Activated T-helper 1 cell treated with anti-CD3 and anti-CD28 coated beads, Interleukin-12 subunit alpha, Interleukin-12 subunit beta, Interleukin-2, Interleukin-4 antibody, amounts not matched to agents 30 ng/mL and 10 ng/mL and 1 ng/mL, durations not matched to agents 14 hours and 24 hours and 36 hours (primary cell): ENCODE measurements at regions of chr12 and their contacts with region 1.

Region 1: DNA sequence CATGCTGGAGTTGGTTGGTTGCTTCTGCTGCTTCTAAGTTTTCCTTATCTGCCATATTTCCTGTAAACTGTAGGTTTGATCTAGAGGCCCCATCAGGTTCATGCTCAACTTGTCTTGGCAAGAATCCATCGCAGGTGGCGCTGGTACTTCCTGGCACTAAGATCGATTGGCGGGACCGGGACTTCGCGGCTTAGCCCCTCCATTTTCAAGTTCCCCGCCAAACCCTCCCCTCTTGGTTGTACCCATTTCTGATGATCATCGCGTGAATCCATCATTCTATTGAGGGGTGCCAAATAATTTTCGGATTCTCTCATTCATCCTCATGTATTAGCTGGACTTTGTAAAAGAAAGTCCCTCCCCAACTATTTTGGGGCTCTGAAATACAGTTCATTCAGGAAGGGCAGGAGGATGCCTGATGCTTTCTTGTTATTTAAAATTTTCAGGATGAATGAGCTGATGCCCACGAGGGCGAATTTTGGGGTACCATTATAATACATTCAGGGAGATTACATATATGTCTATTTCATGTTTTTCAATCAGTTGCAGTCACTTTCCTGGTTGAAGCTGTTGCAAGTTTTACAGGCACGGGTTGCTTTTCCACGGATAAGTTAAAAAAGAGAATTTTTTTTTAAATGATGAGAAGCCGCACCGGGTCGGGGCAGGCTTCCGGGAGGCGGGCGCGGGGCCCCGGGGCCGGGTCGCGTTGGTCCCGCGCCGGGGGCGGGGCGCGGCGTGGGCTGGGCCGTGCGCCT is 395 bp upstream of the BRI3BP start:
- DNase-seq: peak; percentile 81
- H3K4me3 Mint-ChIP-seq: peak overlapping the region; percentile 88
- H3K27ac Mint-ChIP-seq: peak overlapping the region; percentile 83
- H3K4me1 Mint-ChIP-seq: peaks cover 33% of the 10 kb centered on the region
- H3K27me3 Mint-ChIP-seq: peaks cover 2% of the 10 kb centered on the region

Region 2: DNA sequence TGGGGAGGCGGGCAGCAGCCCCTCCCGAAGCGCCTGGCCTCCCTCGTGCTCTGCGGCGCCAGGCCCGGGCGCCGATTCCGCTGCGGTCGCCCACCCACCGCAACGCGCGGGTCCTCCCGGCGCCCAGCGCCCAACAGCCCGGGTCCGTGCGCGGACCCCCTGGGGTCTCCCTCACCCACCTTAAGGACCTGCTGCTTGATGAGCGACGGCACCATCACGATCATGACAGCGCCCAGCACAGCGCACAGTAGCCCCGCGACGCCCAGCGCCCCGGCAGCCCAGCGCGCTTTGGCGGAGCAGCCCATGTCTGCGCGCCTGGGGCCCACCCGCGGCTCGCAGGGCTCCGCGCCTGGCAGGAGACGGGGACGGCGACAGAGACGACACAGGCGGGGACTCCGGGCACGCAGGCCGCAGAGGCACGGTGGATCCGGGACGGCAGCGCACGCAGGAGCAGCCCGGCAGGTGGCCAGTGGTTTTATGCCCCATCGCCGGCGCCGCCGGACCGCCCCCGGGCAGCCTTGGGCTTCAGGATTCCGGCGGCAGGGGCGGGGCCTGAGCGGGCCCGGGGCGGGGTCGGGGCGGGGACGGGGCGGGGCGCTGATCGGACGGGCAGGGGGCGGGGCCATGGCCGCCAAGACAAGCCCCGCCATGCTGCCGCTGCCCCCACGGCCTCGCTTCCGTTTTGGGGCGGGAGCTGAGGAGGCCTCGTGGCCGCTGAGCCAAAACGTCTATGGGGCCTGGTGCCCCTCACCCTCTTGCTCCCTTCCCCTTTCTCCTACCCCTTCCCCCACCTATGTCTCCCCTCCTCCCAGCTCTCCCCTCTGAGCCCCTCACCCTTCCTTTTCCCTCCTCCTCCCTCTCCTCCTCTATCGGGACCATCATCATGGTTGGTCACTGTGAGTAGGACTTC is 129.4 kb before region 1 on chr12 and contains the start of gene SCARB1:
- intact Hi-C with region 1: loop called (anchors 1 kb)
- DNase-seq: peak; percentile 70
- H3K4me3 Mint-ChIP-seq: peak within 1 kb of the TSS; percentile 85
- H3K27ac Mint-ChIP-seq: peak within 1 kb of the TSS; percentile 90
- H3K4me1 Mint-ChIP-seq: peaks cover 23% of the 10 kb centered on the region
- H3K27me3 Mint-ChIP-seq: peaks cover 2% of the 10 kb centered on the region
- total RNA-seq, gene SCARB1: 17.9 and 18.5 TPM in 2 replicates

Region 3: GRCh38 chr12:124917135-124917840 is 75.8 kb before region 1 on chr12:
- intact Hi-C with region 1: loop called (anchors 1 kb)
- DNase-seq: peak; percentile 92
- H3K4me3 Mint-ChIP-seq: peak overlapping the region; percentile 97
- H3K27ac Mint-ChIP-seq: peak overlapping the region; percentile 100
- H3K4me1 Mint-ChIP-seq: peaks cover 84% of the 10 kb centered on the region
- H3K27me3 Mint-ChIP-seq: no peaks in the 10 kb centered on the region

Region 4: GRCh38 chr12:124940549-124941527 is 52.2 kb before region 1 on chr12:
- intact Hi-C with region 1: loop called (anchors 1 kb)
- DNase-seq: peak; percentile 80
- H3K4me3 Mint-ChIP-seq: no peak overlapping the region
- H3K27ac Mint-ChIP-seq: no peak overlapping the region
- H3K4me1 Mint-ChIP-seq: no peaks in the 10 kb centered on the region
- H3K27me3 Mint-ChIP-seq: no peaks in the 10 kb centered on the region

Region 5: DNA sequence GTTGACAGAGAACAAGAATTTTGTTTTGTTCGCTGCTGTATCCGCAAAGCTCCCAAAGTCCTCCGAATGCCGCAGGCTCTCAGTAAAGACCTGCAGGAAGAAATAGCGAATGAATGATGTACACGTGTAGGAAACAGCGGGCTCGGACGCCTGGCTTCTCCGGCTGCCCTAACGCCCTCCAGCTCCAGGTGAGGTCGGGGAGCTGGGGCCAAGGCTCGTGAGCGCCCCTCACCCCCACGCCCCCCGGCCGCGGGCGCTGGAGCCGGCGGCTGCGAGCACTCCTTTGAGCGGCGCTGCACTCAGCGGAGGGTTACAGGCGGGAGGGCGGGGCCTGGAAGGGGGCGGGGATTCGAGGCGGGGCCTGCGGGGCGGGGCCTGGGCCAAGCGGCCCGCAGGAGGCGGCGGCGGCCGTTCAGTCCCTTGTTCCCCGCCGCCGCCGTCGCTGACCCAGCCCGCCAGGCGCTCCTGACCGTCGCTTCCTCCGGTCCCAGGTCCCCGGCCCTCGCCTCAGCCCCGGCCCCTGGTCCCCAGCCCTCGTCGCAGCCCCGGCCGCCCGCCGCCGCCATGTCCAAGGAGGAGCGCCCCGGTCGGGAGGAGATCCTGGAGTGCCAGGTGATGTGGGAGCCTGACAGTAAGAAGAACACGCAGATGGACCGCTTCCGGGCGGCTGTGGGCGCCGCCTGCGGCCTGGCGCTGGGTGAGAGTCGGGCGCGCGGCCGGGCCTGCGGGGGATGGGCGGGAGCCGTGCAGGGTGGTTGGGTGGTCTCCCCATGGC is 72.2 kb after region 1 on chr12 and contains the start of gene AACS:
- intact Hi-C with region 1: loop called (anchors 1 kb)
- DNase-seq: peak; percentile 58
- H3K4me3 Mint-ChIP-seq: peak within 1 kb of the TSS; percentile 84
- H3K27ac Mint-ChIP-seq: peak within 1 kb of the TSS; percentile 40
- H3K4me1 Mint-ChIP-seq: peaks cover 17% of the 10 kb centered on the region
- H3K27me3 Mint-ChIP-seq: peaks cover 7% of the 10 kb centered on the region
- total RNA-seq, gene AACS: 26.7 and 27.8 TPM in 2 replicates